Heart left ventricle (tissue), 16 donors: ENCODE measurements at regions of chr11 and their contacts with region 1.

Region 1: DNA sequence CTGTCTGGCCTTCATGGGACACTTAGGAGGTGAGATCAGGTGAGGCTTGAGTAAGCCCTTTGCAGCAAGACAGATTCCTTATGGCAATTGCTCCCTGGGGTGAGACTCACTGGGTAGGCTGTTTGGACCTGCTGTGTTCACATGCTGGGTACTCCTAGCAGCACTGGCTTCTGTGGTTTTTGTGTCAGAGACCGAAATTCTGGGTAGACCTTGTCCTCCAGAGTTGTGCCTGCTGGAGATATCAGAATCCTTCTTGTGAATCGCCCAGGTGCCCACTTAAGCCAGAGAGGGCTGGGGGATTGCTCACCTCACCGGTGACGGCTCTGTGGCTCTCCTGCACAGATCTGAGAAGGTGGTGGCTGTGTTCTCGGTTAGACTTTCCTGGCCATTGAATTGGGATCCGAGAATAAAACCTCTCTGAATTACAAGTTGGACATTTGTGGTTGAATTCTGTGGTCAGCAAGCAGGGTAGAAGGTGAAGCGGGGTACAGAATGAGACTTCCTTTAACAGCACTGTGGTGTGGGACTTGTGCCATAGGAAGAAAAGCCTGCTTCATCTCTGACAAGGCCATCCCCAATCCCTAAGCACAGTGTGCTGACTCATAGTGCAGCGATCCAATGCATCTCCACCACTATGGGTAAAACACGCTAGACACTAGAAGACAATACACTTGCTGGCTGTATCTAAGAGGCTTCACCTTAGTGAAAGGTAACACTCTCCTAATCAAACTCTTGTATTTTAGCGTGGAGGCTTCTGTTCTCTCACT is 52.5 kb upstream of the TTC12 start:
- DNase-seq: peak in 1 of 5 donors; percentile 42
- ATAC-seq: peak in 3 of 4 donors; percentile 71 to 79 (median 71)
- H3K4me3 ChIP-seq: no peak overlapping the region
- H3K27ac ChIP-seq: peak overlapping the region in 4 of 12 donors; percentile 1 to 37 (median 20)
- H3K4me1 ChIP-seq: peaks cover 0 to 23% (median 4%) of the 10 kb centered on the region in 12 donors
- H3K27me3 ChIP-seq: no peaks in the 10 kb centered on the region
- CTCF ChIP-seq: no peak
- POLR2A ChIP-seq: no peak

Region 2: DNA sequence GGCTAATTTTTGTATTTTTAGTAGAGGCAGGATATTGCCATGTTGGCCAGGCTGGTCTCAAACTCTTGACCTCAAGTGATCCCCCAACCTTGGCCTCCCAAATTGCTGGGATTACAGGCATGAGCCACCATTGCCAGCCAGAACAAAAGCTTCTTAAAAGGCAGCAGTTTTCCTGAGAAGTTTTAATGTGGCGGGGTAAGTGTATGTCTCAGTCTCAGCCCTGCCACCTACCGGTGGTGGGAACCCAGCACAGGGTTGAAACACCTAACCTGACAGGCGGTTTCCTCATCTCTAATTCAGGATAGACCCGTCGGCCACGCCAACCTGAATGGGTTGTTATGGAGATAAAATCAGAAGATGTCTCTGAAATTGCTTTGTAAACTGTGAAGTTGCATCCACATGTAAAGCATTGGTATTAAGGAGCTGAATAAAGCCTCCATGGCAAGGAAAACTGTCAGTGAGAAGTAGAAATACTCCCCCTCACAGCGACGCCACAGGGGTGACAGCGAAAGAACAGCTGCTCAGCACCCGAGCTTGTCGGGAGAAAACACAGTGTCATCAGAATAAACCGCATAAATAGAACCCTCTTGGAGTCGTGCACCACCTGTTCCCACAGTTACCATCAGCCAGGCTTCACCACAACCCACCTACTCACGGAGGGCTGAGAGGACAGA is 466.6 kb before region 1 on chr11:
- intact Hi-C with region 1: loop called in 1 of 10 experiments (anchors 10 kb)
- DNase-seq: no peak
- ATAC-seq: peak in 2 of 4 donors; percentile 47 to 50
- H3K4me3 ChIP-seq: no peak overlapping the region
- H3K27ac ChIP-seq: peak overlapping the region in 4 of 12 donors; percentile 19 to 42 (median 29)
- H3K4me1 ChIP-seq: peaks cover 0 to 39% (median 14%) of the 10 kb centered on the region in 12 donors
- H3K27me3 ChIP-seq: no peaks in the 10 kb centered on the region
- CTCF ChIP-seq: peak; percentile 21 to 63 (median 47)
- POLR2A ChIP-seq: no peak

Region 3: GRCh38 chr11:112817376-112817775 is 444.5 kb before region 1 on chr11:
- intact Hi-C with region 1: loop called in 1 of 10 experiments (anchors 10 kb)
- DNase-seq: no peak
- ATAC-seq: no peak
- H3K4me3 ChIP-seq: no peak overlapping the region
- H3K27ac ChIP-seq: no peak overlapping the region
- H3K4me1 ChIP-seq: no peaks in the 10 kb centered on the region
- H3K27me3 ChIP-seq: no peaks in the 10 kb centered on the region
- CTCF ChIP-seq: no peak
- POLR2A ChIP-seq: no peak

Region 4: DNA sequence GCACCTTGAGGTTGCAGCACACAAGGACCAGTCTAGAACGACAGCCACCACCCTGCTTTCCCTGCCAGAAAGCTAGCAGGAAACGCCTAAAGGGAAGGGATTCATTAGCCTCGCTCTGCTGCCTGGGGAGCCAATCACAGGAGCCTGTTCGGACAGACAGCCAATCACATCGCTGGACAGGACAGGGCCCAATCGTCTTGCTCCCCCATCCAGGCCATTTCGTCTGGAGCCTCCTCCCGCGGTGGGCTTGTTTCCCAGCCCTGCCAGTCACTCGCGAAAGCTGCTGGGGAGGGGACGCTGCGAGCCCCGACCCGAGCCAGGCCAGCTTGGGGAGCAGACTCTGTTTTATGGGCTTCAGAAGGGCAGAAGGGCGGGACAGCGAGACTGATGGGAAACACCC is 380.4 kb before region 1 on chr11:
- intact Hi-C with region 1: no loop called
- DNase-seq: peak; percentile 77 to 90 (median 83)
- ATAC-seq: peak; percentile 87 to 96 (median 92)
- H3K4me3 ChIP-seq: peak overlapping the region in 11 of 12 donors; percentile 16 to 63 (median 44)
- H3K27ac ChIP-seq: peak overlapping the region in 11 of 12 donors; percentile 35 to 86 (median 71)
- H3K4me1 ChIP-seq: peaks cover 0 to 33% (median 8%) of the 10 kb centered on the region in 12 donors
- H3K27me3 ChIP-seq: no peaks in the 10 kb centered on the region
- CTCF ChIP-seq: no peak
- POLR2A ChIP-seq: peak in 1 of 2 donors; percentile 64

Region 5: GRCh38 chr11:113345978-113346377 is 84.1 kb after region 1 on chr11:
- intact Hi-C with region 1: no loop called
- DNase-seq: no peak
- ATAC-seq: no peak
- H3K4me3 ChIP-seq: no peak overlapping the region
- H3K27ac ChIP-seq: no peak overlapping the region
- H3K4me1 ChIP-seq: no peaks in the 10 kb centered on the region
- H3K27me3 ChIP-seq: no peaks in the 10 kb centered on the region
- CTCF ChIP-seq: no peak
- POLR2A ChIP-seq: no peak